K562 (cell line): ENCODE measurements at regions of chr6 and their contacts with region 1.

Region 1: GRCh38 chr6:133952815-133953633 is at the start of gene TBPL1:
- DNase-seq: peak; percentile 90 to 99 (median 93)
- ATAC-seq: peak; percentile 78
- H3K4me3 ChIP-seq: peak within 1 kb of the TSS; percentile 92
- H3K27ac ChIP-seq: peak within 1 kb of the TSS; percentile 87
- H3K4me1 ChIP-seq: peaks cover 7 to 11% of the 10 kb centered on the region in 2 experiments; a peak in 2 of 5 replicates
- H3K27me3 ChIP-seq: no peaks in the 10 kb centered on the region
- CTCF ChIP-seq: no peak
- EP300 ChIP-seq: peak; percentile 67
- POLR2A ChIP-seq: peak; percentile 89
- RAD21 ChIP-seq: no peak
- polyA plus RNA-seq, gene TBPL1: 107 to 147 TPM

Region 2: GRCh38 chr6:133841176-133841575 is 111.8 kb before region 1 on chr6:
- CTCF ChIA-PET with region 1: no interaction called
- POLR2A ChIA-PET with region 1: no interaction called
- in situ Hi-C with region 1: no loop called
- intact Hi-C with region 1: no loop called
- DNase-seq: no peak
- ATAC-seq: no peak
- H3K4me3 ChIP-seq: no peak overlapping the region
- H3K27ac ChIP-seq: no peak overlapping the region
- H3K4me1 ChIP-seq: peaks cover 0 to 5% of the 10 kb centered on the region in 2 experiments; a peak in 2 of 5 replicates
- H3K27me3 ChIP-seq: no peaks in the 10 kb centered on the region; a peak in 1 of 5 replicates
- CTCF ChIP-seq: no peak
- EP300 ChIP-seq: no peak
- POLR2A ChIP-seq: no peak
- RAD21 ChIP-seq: no peak

Region 3: GRCh38 chr6:133966654-133967329 is 13.8 kb after region 1 on chr6:
- CTCF ChIA-PET with region 1: no interaction called
- POLR2A ChIA-PET with region 1: interaction called, 11 read pairs
- in situ Hi-C with region 1: no loop called
- intact Hi-C with region 1: no loop called
- DNase-seq: no peak
- ATAC-seq: peak; percentile 18
- H3K4me3 ChIP-seq: no peak overlapping the region
- H3K27ac ChIP-seq: peak overlapping the region; percentile 21; the same call in 1 of the 3 replicates
- H3K4me1 ChIP-seq: peaks cover 24 to 44% of the 10 kb centered on the region in 2 experiments; a peak in 4 of 5 replicates
- H3K27me3 ChIP-seq: no peaks in the 10 kb centered on the region
- CTCF ChIP-seq: no peak
- EP300 ChIP-seq: no peak
- POLR2A ChIP-seq: no peak; the same call in 1 of the 2 replicates
- RAD21 ChIP-seq: no peak

Region 4: DNA sequence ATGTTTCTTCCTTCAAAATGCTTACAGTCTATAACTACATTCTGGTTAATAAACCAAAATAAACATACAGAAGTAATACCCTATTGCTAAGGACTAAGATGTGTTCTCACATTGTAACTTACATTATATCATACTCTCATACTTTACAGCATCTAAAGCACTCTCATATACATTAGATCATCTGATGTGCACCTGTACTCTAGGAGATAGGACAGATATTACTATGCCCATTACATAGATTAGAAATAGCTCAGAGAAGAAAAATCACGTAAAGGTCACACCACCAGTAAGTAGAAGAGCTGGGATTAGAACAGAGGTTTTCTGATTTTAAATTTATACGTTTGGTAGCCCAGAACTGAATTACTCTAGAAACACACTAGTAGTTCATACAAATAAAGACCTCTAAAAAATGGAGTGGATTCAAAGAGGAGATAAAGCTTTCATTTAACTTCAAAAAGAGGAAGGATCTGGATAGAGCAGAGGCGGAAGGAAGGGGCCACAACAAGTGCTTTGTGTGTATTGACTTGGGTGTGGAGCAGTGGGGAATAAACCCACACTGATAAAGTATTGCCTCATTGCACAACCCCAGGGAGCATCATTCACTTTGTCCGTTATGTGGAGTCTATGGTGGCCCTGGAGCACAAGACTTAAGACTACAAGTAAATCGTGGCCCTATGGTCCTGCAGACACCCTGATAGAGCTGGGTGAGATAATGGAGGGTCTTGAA is 68.5 kb after region 1 on chr6:
- CTCF ChIA-PET with region 1: no interaction called
- POLR2A ChIA-PET with region 1: interaction called, 3 read pairs
- in situ Hi-C with region 1: no loop called
- intact Hi-C with region 1: loop called (anchors 1 kb)
- DNase-seq: peak in 2 of 4 experiments; percentile 24 to 29
- ATAC-seq: peak; percentile 41
- H3K4me3 ChIP-seq: no peak overlapping the region
- H3K27ac ChIP-seq: no peak overlapping the region
- H3K4me1 ChIP-seq: peaks cover 4 to 26% of the 10 kb centered on the region in 2 experiments
- H3K27me3 ChIP-seq: no peaks in the 10 kb centered on the region
- CTCF ChIP-seq: no peak
- EP300 ChIP-seq: peak; percentile 71
- POLR2A ChIP-seq: no peak
- RAD21 ChIP-seq: no peak

Region 5: GRCh38 chr6:135183532-135184440 is 1230.8 kb after region 1 on chr6:
- CTCF ChIA-PET with region 1: no interaction called
- POLR2A ChIA-PET with region 1: no interaction called
- in situ Hi-C with region 1: no loop called
- intact Hi-C with region 1: loop called (anchors 10 kb)
- DNase-seq: peak; percentile 66 to 96 (median 76)
- ATAC-seq: peak; percentile 81
- H3K4me3 ChIP-seq: peak overlapping the region; percentile 71
- H3K27ac ChIP-seq: peak overlapping the region; percentile 73
- H3K4me1 ChIP-seq: peaks cover 23 to 26% of the 10 kb centered on the region in 2 experiments
- H3K27me3 ChIP-seq: no peaks in the 10 kb centered on the region
- CTCF ChIP-seq: peak; percentile 87 to 92 (median 92)
- EP300 ChIP-seq: peak; percentile 10
- POLR2A ChIP-seq: no peak
- RAD21 ChIP-seq: peak; percentile 85 to 87